Dorsolateral prefrontal cortex (tissue), 120 donors: ENCODE measurements at regions of chr6 and their contacts with region 1.

Region 1: DNA sequence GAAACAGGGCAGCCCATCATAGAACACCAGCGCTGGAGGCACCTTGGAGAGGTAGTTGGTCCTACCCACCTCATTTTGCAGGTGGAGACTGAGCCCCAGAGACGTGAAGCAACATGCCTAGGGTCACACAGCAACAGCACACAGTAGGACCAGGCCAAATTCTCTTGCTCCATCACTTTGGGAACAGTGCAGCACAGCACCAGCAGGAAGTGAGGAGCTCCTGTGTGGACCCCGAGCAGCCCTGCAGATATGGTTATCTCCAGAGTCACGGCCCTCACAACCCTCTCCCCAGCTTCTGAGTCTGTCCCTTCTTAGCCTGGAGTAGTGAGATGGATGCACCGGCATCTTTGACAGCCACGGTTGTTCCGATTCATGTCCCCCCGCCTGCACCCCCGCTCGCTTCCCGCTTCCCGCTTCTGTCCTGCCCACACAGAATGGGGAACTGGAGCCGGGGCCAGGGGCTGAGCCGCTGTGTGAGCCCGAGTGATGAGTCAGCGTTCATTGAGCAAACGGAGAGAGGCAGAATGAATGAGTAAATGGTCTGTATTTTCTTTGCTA is 72.6 kb upstream of the DUSP22 start:
- DNase-seq: peak in 6 of 10 donors; percentile 28 to 61 (median 42)
- H3K4me3 ChIP-seq: no peak overlapping the region
- H3K27ac ChIP-seq: no peak overlapping the region
- H3K27me3 ChIP-seq: peaks cover 0 to 5% (median 0%) of the 10 kb centered on the region in 45 donors
- CTCF ChIP-seq: no peak

Region 2: GRCh38 chr6:498795-499231 is 279.1 kb after region 1 on chr6:
- intact Hi-C with region 1: no loop called
- DNase-seq: no peak
- H3K4me3 ChIP-seq: no peak overlapping the region
- H3K27ac ChIP-seq: no peak overlapping the region
- H3K27me3 ChIP-seq: no peaks in the 10 kb centered on the region
- CTCF ChIP-seq: no peak

Region 3: GRCh38 chr6:551405-551804 is 331.7 kb after region 1 on chr6:
- intact Hi-C with region 1: loop called in 1 of 2 experiments (anchors 10 kb)
- DNase-seq: no peak
- H3K4me3 ChIP-seq: no peak overlapping the region
- H3K27ac ChIP-seq: no peak overlapping the region
- H3K27me3 ChIP-seq: no peaks in the 10 kb centered on the region
- CTCF ChIP-seq: peak in 27 of 56 donors; percentile 5 to 55 (median 24)